Activated T-helper 2 cell treated with anti-CD3 and anti-CD28 coated beads, Interferon-gamma antibody, Interleukin-2, Interleukin-4, amounts not matched to agents 10 μg/mL and 5 μg/mL and 100 μg/mL, durations not matched to agents 14 hours and 24 hours and 36 hours (primary cell): ENCODE measurements at regions of chr5 and their contacts with region 1.

Region 1: GRCh38 chr5:65047948-65048690 is 279.4 kb downstream of the CWC27 start:
- DNase-seq: no peak
- H3K4me3 Mint-ChIP-seq: no peak overlapping the region
- H3K27ac Mint-ChIP-seq: no peak overlapping the region
- H3K4me1 Mint-ChIP-seq: peaks cover 4% of the 10 kb centered on the region
- H3K27me3 Mint-ChIP-seq: peaks cover 5% of the 10 kb centered on the region

Region 2: GRCh38 chr5:65066385-65067146 is 18.4 kb after region 1 on chr5:
- intact Hi-C with region 1: loop called (anchors 1 kb)
- DNase-seq: no peak
- H3K4me3 Mint-ChIP-seq: no peak overlapping the region
- H3K27ac Mint-ChIP-seq: no peak overlapping the region
- H3K4me1 Mint-ChIP-seq: no peaks in the 10 kb centered on the region
- H3K27me3 Mint-ChIP-seq: peaks cover 19% of the 10 kb centered on the region

Region 3: GRCh38 chr5:65086234-65086890 is 38.2 kb after region 1 on chr5:
- intact Hi-C with region 1: no loop called
- DNase-seq: no peak
- H3K4me3 Mint-ChIP-seq: no peak overlapping the region
- H3K27ac Mint-ChIP-seq: no peak overlapping the region
- H3K4me1 Mint-ChIP-seq: no peaks in the 10 kb centered on the region
- H3K27me3 Mint-ChIP-seq: peaks cover 9% of the 10 kb centered on the region